ENCODE measurements at regions of chr10 and their contacts with region 1.

Region 1: DNA sequence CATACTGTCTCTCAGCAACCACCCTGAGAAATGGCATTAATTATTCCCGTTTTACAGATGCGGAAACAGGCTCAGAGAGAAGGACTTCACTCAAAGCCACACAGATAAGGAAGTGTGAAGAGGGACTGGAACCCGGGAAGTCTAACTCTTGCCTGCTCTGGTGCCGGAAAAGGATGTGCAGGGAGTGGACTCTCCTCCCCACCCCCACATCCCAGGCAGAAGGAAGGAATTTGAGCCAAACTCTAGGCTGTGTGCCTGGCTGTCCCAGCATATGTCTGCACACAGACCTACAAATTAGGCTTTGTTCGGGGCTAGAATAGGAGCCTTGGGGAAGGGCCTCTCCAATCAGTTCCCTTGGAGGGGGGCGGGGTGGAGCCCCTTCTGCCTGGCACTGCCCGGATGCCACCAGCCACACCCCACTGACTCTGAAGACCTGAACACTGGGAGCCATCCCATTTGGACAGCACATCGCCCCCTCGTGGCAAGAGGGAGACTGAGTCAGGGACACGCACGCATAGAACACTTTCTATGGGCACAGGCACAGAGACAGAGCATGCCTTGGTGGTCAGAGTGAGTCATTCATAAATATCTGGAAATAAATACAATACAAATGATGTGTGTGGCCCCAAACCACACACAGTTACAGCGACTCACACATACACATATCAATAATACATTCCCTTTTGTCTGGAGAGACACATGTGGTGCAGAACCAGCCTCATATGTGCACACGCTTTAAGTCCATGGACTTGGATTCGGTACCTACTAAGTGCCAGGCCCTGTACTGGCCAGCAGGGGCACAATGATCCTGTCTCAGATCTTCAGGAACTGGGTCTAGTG is 13.1 kb downstream of the LZTS2 start:
- DNase-seq: peak; percentile 91
- ATAC-seq: peak; percentile 87 to 88

Region 2: DNA sequence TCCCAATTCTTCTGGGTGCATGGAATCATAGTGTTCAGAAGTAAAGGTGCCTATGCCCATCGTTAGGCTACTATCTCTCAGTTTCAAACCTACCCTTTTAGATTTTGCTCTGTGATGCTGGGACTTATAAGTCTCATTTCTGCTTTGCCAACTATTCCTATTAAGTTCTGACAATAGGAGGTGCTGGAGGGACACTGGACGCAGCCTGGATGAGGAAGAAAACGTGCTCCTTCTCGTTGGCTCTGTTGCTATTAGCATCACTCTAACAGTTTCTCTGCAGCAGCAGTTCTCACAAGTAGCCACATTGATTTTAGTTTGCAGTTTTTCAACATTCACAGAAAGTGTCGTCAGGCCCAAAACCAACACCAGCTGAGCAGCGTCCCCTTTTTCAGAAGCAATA is 1157.9 kb before region 1 on chr10:
- intact Hi-C with region 1: no loop called
- DNase-seq: no peak
- ATAC-seq: peak in 1 of 2 donors; percentile 50

Region 3: DNA sequence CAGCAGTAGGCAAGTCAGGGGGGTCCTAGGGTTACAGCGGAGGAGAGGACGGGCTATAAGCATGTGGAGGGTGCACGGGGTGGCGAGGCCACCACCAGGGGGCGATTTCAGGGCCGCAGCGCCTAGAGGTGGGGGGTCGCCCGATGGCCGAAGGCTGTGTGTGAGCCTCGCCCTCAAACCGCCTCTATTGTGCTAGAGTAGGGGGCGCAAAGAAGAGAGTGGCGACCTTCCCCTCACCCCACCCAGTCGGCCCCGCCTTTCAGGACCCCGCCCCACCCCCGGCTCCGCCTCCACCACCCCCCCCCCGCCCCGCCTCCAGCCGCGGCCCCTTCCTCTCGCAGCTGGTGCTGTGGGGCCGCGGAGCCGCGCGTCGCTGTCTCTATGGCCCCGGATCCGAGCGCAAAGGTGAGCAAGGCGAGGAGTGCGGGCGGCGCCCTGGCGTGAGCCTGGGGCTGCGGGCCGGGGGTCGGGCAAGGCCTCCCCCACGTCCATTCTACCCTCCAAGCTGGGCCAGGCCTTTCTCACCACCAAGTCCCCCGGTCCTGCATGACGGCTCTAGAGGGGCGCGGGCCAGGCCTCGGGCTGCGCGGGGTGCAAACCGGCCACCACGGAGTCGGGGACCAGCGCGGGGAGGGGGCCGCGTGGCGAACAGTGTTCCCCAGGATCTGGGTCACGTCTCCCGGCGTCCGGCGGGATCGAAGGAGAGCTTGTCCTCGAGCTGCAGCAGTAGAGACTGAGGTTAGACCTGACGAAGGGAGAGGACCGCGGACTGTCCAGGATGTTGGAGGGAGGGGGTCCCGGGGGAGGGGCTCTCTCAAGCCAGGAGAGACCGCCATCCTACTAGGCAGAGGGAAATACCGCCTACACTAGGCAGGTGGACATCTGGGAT is 43.3 kb before region 1 on chr10 and contains the start of gene SEMA4G:
- intact Hi-C with region 1: loop called in 1 of 2 experiments (anchors 2 kb)
- DNase-seq: peak; percentile 54
- ATAC-seq: peak; percentile 81 to 84
- total RNA-seq, gene SEMA4G: 2.4 to 2.7 TPM

Region 4: DNA sequence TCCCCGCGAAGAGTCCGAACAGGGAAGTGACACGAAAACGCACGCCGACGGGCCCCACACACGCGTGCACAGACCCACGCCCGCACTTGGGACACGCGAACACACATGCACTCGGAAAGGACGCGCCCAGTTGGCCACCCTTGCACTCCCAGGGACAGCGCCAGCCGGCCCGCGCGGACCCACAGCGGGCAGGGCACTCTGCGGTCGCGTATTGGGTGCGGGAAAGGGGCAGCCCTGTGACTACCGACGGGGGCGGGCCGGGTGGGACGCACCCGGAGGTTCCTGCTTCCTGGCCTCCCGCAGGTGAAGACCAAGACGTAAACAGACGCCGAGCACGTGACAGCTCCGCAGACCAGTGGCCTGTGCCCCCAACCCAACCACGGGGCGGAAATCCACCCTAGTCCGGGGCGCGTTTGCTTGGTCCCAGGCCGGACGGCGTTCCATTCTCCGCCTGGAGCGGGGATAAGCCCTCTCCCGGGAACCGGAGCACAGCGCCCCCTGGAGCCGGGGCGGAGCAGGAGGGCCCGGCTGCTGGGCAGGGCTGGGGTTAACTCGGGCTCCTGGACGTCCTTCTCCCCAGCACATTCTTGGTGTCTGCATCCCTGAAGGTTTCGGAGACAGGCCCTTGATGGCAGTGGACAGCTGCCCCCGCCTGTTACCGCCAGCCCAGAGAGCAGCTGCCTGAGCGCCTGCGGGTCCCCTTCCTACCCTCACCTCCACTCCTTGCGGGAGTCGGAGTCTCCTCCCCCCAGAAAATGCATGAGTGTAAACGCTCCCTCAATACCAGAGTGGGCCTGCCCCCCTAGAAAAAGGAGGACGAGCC is 15.2 kb before region 1 on chr10:
- intact Hi-C with region 1: loop called in 1 of 2 experiments (anchors 1 kb)
- DNase-seq: peak; percentile 71
- ATAC-seq: peak; percentile 32 to 55

Region 5: GRCh38 chr10:101141616-101142532 is 129.1 kb after region 1 on chr10:
- intact Hi-C with region 1: no loop called
- DNase-seq: peak; percentile 78
- ATAC-seq: peak; percentile 85 to 89

Region 6: GRCh38 chr10:101195921-101196320 is 183.2 kb after region 1 on chr10:
- intact Hi-C with region 1: no loop called
- DNase-seq: no peak
- ATAC-seq: no peak

Measured in left cardiac atrium (tissue), 4 donors.